Dorsolateral prefrontal cortex (tissue), 120 donors: ENCODE measurements at regions of chr6 and their contacts with region 1.

Region 1: GRCh38 chr6:26122793-26123674 is 35.8 kb downstream of the HFE start:
- DNase-seq: peak; percentile 70 to 96 (median 91)
- H3K4me3 ChIP-seq: peak overlapping the region; percentile 64 to 99 (median 91)
- H3K27ac ChIP-seq: peak overlapping the region; percentile 82 to 99 (median 97)
- H3K27me3 ChIP-seq: no peaks in the 10 kb centered on the region
- CTCF ChIP-seq: peak in 16 of 56 donors; percentile 5 to 36 (median 15)

Region 2: DNA sequence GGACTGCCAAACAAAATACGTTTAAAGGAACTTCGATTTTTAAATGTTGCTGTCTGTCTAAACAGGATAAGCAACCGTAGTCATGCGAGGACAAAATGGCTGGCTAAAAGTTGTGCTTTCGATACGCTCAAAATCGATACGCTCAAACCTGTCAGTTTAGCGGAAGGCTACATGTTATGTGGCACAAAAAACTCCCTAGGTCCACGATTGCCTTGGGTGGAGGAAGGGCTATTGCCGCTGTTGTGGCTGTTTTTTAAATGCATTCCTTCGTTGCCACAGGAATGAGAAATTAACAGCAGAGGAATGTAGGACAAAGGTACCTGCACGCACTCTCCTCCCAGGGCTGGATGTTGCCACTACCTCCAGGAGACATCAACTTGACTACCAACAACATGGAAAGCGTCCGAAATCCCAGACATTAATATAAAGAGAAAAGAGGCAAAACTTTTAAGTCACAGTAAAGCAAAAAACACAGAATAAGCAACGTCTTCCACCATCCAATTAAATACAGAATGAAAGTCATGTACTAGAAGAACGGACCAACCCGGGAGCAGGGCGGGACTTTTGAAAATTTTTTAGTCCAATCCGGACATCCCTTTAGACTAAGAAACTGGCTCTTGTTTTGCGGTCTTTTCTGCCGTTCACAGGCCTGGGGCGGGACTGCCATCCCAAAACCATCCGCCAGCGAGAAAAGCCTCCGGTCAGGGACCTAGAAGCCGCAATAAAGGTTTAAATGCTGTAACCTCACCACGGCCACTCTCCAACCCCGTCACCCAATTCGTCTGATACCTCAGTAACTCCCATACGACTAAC is 68.0 kb before region 1 on chr6:
- intact Hi-C with region 1: loop called in 1 of 2 experiments (anchors 2 kb)
- DNase-seq: peak; percentile 65 to 96 (median 88)
- H3K4me3 ChIP-seq: peak overlapping the region; percentile 55 to 99 (median 81)
- H3K27ac ChIP-seq: peak overlapping the region; percentile 10 to 98 (median 91)
- H3K27me3 ChIP-seq: no peaks in the 10 kb centered on the region
- CTCF ChIP-seq: peak in 40 of 56 donors; percentile 6 to 56 (median 35)

Region 3: DNA sequence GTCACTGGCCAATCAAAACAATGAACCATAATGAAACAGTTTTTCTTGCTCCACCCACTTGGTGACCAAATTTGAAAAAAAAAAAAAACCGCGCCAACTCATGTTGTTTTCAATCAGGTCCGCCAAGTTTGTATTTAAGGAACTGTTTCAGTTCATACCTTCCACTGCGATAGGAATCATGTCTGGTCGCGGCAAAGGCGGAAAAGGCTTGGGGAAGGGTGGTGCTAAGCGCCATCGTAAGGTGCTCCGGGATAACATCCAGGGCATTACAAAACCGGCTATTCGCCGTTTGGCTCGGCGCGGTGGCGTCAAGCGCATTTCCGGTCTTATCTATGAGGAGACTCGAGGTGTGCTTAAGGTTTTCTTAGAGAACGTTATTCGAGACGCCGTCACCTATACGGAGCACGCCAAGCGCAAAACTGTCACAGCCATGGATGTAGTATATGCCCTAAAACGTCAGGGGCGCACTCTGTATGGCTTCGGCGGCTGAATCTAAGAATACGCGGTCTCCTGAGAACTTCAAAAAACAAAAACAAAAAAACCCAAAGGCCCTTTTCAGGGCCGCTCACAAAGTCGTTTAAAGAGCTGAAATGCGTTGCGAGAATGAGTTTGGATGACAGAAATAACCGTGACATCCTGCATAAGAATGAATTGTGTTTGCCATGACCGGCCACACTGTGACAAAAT is 19.1 kb before region 1 on chr6:
- intact Hi-C with region 1: loop called in 1 of 2 experiments (anchors 2 kb)
- DNase-seq: peak; percentile 69 to 93 (median 87)
- H3K4me3 ChIP-seq: peak overlapping the region; percentile 41 to 86 (median 70)
- H3K27ac ChIP-seq: peak overlapping the region in 58 of 59 donors; percentile 24 to 94 (median 84)
- H3K27me3 ChIP-seq: no peaks in the 10 kb centered on the region
- CTCF ChIP-seq: peak in 44 of 56 donors; percentile 14 to 54 (median 32)

Region 4: GRCh38 chr6:26141378-26141904 is 18.4 kb after region 1 on chr6:
- intact Hi-C with region 1: loop called in 1 of 2 experiments (anchors 2 kb)
- DNase-seq: peak in 9 of 10 donors; percentile 42 to 89 (median 78)
- H3K4me3 ChIP-seq: peak overlapping the region in 34 of 59 donors; percentile 0 to 52 (median 21)
- H3K27ac ChIP-seq: peak overlapping the region; percentile 67 to 97 (median 91)
- H3K27me3 ChIP-seq: no peaks in the 10 kb centered on the region
- CTCF ChIP-seq: no peak

Region 5: DNA sequence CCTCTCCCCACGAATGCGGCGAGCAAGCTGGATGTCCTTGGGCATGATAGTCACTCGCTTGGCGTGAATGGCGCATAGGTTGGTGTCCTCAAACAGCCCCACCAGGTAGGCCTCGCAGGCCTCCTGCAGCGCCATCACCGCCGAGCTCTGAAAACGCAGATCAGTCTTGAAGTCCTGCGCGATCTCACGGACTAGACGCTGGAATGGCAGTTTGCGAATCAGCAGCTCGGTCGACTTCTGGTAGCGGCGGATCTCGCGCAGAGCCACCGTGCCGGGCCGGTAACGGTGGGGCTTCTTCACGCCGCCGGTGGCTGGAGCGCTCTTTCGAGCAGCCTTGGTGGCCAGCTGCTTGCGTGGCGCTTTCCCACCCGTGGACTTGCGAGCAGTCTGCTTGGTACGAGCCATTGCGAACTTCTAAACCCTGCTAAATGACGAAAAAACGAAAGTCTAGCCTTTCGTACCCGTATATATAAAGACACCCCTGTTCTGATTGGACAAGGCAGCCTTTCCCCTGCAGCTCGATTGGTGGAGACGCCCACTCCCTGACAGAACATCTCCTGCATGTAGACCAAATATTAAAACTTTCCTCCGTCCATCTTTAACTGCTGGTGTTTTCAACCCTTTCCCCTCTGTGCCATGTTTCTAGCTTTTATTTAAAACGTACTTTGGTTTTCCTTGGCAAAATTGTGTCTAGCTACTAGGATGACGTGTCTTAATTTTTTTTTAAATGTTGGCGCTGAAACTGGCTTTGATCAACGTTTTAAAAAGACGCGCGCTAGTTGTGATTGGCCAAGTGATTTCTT is 74.0 kb after region 1 on chr6:
- intact Hi-C with region 1: loop called in 1 of 2 experiments (anchors 2 kb)
- DNase-seq: peak in 9 of 10 donors; percentile 61 to 85 (median 80)
- H3K4me3 ChIP-seq: peak overlapping the region; percentile 52 to 86 (median 74)
- H3K27ac ChIP-seq: peak overlapping the region in 57 of 59 donors; percentile 21 to 93 (median 80)
- H3K27me3 ChIP-seq: peaks cover 0 to 18% (median 0%) of the 10 kb centered on the region in 45 donors
- CTCF ChIP-seq: peak in 7 of 56 donors; percentile 4 to 26 (median 19)

Region 6: GRCh38 chr6:26204332-26205165 is 81.5 kb after region 1 on chr6:
- intact Hi-C with region 1: loop called (anchors 1 to 2 kb)
- DNase-seq: peak; percentile 90 to 99 (median 96)
- H3K4me3 ChIP-seq: peak overlapping the region; percentile 57 to 100 (median 82)
- H3K27ac ChIP-seq: peak overlapping the region; percentile 73 to 99 (median 94)
- H3K27me3 ChIP-seq: peaks cover 0 to 18% (median 0%) of the 10 kb centered on the region in 45 donors
- CTCF ChIP-seq: peak in 51 of 56 donors; percentile 20 to 71 (median 51)